Heart right ventricle (tissue), 16 donors: ENCODE measurements at regions of chr9 and their contacts with region 1.

Region 1: GRCh38 chr9:122125158-122125508 is 32.0 kb upstream of the TTLL11 start:
- DNase-seq: peak; percentile 79 to 85
- ATAC-seq: peak; percentile 78 to 91 (median 84)
- H3K4me3 ChIP-seq: no peak overlapping the region
- H3K27ac ChIP-seq: no peak overlapping the region
- H3K4me1 ChIP-seq: peaks cover 12 to 47% (median 30%) of the 10 kb centered on the region in 9 donors
- H3K27me3 ChIP-seq: peaks cover 0 to 32% (median 3%) of the 10 kb centered on the region in 7 donors
- CTCF ChIP-seq: peak in 8 of 9 donors; percentile 90 to 98 (median 96)

Region 2: GRCh38 chr9:122099271-122099869 is 25.8 kb before region 1 on chr9:
- intact Hi-C with region 1: loop called in 7 of 10 experiments (anchors 1 to 2 kb)
- DNase-seq: peak; percentile 79 to 85
- ATAC-seq: peak; percentile 54 to 91 (median 87)
- H3K4me3 ChIP-seq: peak overlapping the region in 2 of 10 donors; percentile 10 to 23
- H3K27ac ChIP-seq: no peak overlapping the region
- H3K4me1 ChIP-seq: peaks cover 0 to 12% (median 3%) of the 10 kb centered on the region in 9 donors
- H3K27me3 ChIP-seq: no peaks in the 10 kb centered on the region
- CTCF ChIP-seq: peak; percentile 81 to 93 (median 87)

Region 3: GRCh38 chr9:122113574-122113973 is 11.6 kb before region 1 on chr9:
- intact Hi-C with region 1: no loop called
- DNase-seq: no peak
- ATAC-seq: no peak
- H3K4me3 ChIP-seq: no peak overlapping the region
- H3K27ac ChIP-seq: no peak overlapping the region
- H3K4me1 ChIP-seq: no peaks in the 10 kb centered on the region
- H3K27me3 ChIP-seq: no peaks in the 10 kb centered on the region
- CTCF ChIP-seq: no peak

Region 4: DNA sequence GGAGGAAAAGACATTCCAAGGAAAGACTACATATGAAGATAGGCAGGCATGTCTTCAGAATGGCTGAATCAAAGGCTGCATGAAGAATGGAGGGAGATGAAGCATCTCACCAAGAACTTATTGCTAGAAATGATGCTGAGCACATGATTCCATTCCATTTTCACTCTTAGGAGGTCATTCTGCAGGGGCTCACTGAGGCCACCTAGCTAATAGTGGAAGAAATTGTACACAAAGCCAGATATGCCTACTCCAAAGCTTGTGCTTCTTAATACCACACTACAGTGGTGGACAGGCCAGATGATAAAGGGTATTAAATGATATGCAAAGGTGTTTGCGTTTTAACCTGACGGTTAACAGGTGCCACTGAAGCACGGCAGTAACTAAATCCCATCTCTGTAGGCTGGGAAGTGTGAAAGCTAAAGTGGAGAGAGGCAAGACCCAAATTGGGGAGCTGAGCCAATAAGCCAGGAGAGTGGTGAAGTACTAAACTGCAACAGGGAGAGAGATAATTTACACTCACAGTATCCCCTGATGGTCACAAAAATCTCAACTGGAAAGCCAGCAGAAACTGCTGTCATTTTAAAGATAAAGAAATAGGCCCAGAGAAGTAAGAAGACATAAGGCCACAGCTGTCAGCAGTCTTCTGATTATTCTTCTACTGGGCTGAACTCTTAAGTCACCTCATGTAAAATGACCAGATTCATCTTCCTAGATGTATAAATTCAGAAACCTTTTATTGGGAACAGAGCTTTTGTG is 19.9 kb after region 1 on chr9:
- intact Hi-C with region 1: loop called in 2 of 10 experiments (anchors 1 to 2 kb)
- DNase-seq: no peak
- ATAC-seq: peak in 3 of 8 donors; percentile 27 to 54 (median 40)
- H3K4me3 ChIP-seq: no peak overlapping the region
- H3K27ac ChIP-seq: peak overlapping the region in 4 of 10 donors; percentile 7 to 80 (median 54)
- H3K4me1 ChIP-seq: peaks cover 2 to 74% (median 34%) of the 10 kb centered on the region in 9 donors
- H3K27me3 ChIP-seq: no peaks in the 10 kb centered on the region
- CTCF ChIP-seq: peak in 8 of 9 donors; percentile 7 to 58 (median 44)